Ascending aorta (tissue), 2 donors: ENCODE measurements at regions of chr6 and their contacts with region 1.

Region 1: DNA sequence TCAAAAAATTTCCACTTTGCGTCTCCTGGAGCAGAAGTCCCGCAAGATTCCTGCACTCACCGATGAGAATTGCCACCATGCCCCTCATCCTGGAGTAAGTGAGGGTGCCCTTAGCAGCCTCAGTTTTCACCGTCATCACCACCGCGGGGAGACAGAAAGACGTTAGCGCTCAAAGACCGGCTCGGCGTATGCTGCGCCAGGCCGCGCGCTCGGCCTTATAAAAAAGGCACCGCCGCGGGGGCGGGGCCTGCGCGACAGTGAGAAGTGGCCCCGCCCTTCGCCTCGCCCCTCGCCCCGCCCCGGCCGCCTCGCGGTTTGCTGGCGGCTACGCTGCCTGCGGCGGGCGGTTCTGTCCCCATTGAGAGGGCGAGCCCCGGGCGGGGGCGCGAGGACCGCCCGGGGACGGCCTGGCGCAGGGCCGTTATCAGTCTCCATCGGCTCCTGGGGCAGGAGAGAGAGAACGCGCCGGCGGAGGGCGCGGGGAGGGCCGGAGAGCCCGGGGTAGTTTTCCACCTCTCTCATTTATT is 122.3 kb upstream of the SLC2A12 start:
- DNase-seq: peak; percentile 75 to 96
- H3K4me3 ChIP-seq: peak overlapping the region; percentile 79 to 90
- H3K27ac ChIP-seq: peak overlapping the region; percentile 99 to 100
- H3K4me1 ChIP-seq: peaks cover 0 to 33% of the 10 kb centered on the region in 2 donors
- H3K27me3 ChIP-seq: no peaks in the 10 kb centered on the region
- CTCF ChIP-seq: no peak

Region 2: DNA sequence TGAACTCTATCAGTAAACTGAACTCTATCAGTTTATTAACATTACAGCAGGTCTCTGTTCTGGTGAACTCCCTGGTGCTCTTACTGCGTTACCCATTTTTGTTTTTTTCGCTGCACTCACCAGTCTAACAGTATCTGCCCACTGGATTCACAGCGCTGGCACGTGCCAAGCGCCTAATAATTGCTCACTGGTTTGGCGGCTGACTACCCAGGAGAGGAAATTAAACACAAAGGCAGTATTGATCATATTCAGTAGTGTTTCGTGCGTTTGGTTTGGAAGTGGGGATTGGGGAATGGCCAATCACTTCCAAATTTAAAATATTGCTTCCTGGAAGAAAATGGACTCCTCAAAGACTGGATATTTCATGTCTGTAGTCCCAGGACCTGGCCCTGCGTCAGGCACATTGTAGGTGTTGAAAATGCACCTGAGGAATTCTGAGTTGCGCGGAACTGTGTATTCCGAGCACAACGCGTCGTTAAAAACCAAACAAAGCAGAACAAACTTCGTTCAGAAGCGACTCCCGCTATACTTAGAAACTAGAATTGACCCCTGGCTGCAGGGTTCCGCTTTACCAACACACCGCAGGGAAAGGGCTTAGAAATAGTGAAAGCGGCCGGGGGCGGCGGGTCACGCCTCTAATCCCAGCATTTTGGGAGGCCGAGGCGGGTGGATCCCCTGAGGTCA is 1361.4 kb before region 1 on chr6:
- intact Hi-C with region 1: loop called (anchors 10 kb)
- DNase-seq: peak in 1 of 2 donors; percentile 74
- H3K4me3 ChIP-seq: peak overlapping the region; percentile 60 to 76
- H3K27ac ChIP-seq: peak overlapping the region; percentile 54 to 56
- H3K4me1 ChIP-seq: peaks cover 10 to 20% of the 10 kb centered on the region in 2 donors
- H3K27me3 ChIP-seq: no peaks in the 10 kb centered on the region
- CTCF ChIP-seq: no peak

Region 3: DNA sequence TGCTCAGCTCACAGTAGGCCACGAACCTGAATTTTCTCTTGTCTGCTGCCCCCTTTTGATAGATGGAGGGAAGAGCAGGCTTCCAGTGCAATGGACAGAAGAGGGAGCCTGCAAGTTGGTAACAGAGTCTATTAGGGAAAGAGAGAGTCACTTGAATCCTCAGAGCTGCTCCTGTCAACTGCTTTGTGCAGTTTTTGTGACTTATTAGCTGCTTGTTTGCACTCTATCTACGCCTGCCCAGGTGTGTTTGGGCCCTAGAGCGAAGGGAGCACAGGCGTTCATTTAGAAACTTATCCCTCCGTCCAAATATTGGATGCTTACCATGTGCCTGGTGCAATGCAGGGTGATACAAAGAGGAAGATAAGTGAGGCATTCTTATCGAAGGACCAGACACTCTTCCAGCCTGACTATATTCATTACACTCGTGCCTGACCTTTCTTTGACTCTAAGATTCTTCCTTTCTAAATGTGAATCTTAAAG is 110.7 kb before region 1 on chr6:
- intact Hi-C with region 1: loop called (anchors 5 kb)
- DNase-seq: peak in 1 of 2 donors; percentile 84
- H3K4me3 ChIP-seq: no peak overlapping the region
- H3K27ac ChIP-seq: no peak overlapping the region
- H3K4me1 ChIP-seq: peaks cover 10 to 21% of the 10 kb centered on the region in 2 donors
- H3K27me3 ChIP-seq: no peaks in the 10 kb centered on the region
- CTCF ChIP-seq: peak; percentile 66 to 90 (median 88)

Region 4: GRCh38 chr6:134138226-134138975 is 36.3 kb before region 1 on chr6:
- intact Hi-C with region 1: no loop called
- DNase-seq: no peak
- H3K4me3 ChIP-seq: no peak overlapping the region
- H3K27ac ChIP-seq: peak overlapping the region; percentile 6 to 72
- H3K4me1 ChIP-seq: no peaks in the 10 kb centered on the region
- H3K27me3 ChIP-seq: no peaks in the 10 kb centered on the region
- CTCF ChIP-seq: no peak

Region 5: DNA sequence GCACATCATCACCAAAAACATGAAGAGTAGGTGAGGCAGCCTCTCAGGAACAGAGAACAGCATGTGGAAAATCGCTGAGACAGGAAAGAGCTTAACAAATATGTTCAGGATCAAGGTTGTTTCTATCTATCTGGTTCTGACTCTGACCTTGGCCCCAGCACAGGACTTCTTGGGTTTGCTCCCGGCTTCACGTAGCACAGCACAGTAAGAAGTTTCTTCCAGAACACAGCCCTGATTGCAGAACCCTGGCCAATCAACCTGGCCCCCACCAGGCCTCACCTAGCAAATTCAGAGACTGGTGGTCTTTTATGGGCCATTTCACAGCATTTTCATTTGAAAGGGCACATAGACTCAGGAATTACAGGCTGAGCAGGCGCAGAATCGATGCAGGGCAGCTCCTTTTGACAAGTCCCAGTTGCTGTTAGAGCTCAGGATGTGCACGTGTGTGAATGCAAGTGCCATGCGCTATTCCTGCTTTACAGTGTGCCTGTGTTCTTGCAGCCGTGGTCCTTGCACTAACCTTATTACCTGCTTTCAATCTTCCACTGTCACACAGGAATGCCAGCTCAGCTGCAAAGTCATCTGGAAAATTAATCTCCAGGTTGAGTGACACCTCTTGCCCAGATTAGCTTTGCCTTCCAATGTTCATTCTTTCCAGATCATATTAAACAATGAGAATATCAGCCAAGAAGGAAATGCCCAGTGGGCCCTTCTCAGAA is 21.8 kb before region 1 on chr6:
- intact Hi-C with region 1: no loop called
- DNase-seq: no peak
- H3K4me3 ChIP-seq: no peak overlapping the region
- H3K27ac ChIP-seq: no peak overlapping the region
- H3K4me1 ChIP-seq: no peaks in the 10 kb centered on the region
- H3K27me3 ChIP-seq: no peaks in the 10 kb centered on the region
- CTCF ChIP-seq: no peak

Region 6: DNA sequence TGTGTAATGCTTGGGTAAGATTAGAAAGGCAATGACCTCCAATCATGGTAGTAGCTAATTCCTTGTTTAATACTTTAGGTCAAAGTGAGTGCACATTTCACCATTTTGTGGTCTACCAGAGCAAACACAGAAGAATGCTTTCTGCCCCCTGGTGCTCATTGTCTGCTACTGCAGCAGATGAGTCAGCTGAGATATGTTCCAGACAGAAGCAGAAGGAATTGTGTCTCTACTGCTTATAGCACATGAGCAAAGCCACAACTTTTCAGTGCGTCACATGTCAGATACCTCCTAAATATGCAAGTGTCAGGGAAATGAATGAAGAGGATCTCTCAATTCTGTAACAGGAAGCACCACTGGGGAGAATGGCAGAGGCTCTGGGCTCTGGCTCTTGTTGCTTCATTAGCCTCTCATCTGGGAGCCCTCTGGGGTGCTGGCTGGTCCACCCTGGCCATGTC is 466.3 kb after region 1 on chr6:
- intact Hi-C with region 1: loop called (anchors 1 kb)
- DNase-seq: peak; percentile 59 to 93
- H3K4me3 ChIP-seq: no peak overlapping the region
- H3K27ac ChIP-seq: no peak overlapping the region
- H3K4me1 ChIP-seq: no peaks in the 10 kb centered on the region
- H3K27me3 ChIP-seq: no peaks in the 10 kb centered on the region
- CTCF ChIP-seq: peak; percentile 90 to 94 (median 91)

Region 7: DNA sequence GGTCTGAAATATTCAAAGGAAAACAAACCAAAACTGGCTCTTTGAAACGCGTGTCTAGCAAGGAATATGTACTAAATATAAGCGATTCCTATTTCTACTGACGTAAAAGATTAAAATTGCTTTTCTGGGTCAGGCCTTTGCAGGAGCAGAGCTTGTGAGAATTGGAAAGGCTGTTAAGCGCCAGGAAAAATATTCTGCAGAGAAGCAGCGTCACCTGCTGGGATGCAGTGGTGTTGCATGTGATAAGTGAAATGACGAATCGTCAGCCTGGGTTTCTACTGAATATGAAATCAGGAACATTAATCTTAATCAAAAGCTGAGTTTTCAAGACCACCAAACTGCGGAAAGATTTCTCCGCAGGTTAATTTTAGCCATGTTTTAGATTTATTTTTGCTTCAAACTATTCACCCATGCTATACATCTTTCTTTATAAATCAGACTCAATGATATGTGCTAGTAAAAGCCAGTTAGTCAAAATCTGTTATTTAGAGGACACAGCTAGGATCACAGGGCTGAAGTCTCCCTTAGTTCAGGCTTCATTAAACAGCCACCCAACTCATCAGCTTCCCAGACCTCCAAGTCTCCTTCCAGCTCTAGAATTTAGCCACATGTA is 707.8 kb after region 1 on chr6:
- intact Hi-C with region 1: loop called (anchors 1 kb)
- DNase-seq: peak in 1 of 2 donors; percentile 84
- H3K4me3 ChIP-seq: no peak overlapping the region
- H3K27ac ChIP-seq: no peak overlapping the region
- H3K4me1 ChIP-seq: no peaks in the 10 kb centered on the region
- H3K27me3 ChIP-seq: no peaks in the 10 kb centered on the region
- CTCF ChIP-seq: peak; percentile 77 to 93 (median 84)

Region 8: DNA sequence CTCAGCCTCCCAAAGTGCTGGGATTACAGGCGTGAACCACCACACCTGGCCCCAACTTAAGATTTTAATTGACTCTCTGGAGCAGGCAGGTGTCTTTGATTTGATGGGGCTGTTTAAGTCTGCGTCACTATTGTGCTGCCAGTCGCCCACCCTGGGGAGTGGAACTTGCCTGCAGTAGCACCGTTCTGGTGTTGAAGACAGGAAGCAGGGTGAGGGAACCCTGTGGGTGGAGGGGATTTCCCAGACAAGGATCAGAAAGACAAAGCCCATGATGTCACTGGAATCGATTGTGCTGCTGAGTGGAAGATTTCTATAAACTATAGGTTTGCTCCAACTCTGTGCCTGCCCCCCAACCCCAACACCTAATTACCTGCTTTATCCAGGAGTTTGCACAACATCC is 764.2 kb after region 1 on chr6:
- intact Hi-C with region 1: loop called (anchors 5 kb)
- DNase-seq: no peak
- H3K4me3 ChIP-seq: no peak overlapping the region
- H3K27ac ChIP-seq: no peak overlapping the region
- H3K4me1 ChIP-seq: no peaks in the 10 kb centered on the region
- H3K27me3 ChIP-seq: no peaks in the 10 kb centered on the region
- CTCF ChIP-seq: no peak

Region 9: DNA sequence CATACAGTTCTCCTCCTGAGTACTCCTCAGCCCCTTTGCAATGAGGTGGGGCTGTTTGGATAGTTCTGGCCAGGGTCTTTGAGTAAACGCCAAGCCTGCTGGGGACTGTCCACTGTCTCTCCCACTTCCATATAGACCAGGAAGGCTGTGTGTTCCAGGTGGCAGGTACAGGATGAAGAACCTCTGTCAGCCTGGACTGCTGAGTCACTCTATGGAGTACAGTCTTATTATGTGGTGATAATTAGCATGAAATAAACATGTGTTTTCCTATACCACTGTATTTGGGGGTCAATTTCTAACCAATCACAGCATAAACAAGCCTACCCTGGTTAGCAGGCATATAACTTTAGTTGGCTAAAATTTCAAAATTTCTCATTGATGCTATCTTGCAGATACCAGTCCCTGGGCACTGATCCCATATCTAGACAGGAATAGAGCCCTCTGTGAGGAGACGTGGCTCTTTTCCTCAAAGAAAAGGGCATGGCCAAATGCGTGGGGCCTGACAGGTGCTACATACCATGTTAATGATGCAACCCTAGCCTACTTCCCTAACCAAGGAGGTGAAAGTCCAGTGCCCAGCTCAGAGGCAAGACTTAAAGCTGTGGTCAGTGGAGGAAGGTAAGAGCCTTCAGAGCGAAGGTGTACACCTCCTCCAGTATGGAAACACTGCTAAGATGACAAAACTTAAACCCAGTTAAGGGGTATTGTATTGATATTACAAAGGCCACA is 779.7 kb after region 1 on chr6:
- intact Hi-C with region 1: no loop called
- DNase-seq: no peak
- H3K4me3 ChIP-seq: no peak overlapping the region
- H3K27ac ChIP-seq: no peak overlapping the region
- H3K4me1 ChIP-seq: no peaks in the 10 kb centered on the region
- H3K27me3 ChIP-seq: no peaks in the 10 kb centered on the region
- CTCF ChIP-seq: no peak